Heart right ventricle (tissue), 16 donors: ENCODE measurements at regions of chr12 and their contacts with region 1.

Region 1: DNA sequence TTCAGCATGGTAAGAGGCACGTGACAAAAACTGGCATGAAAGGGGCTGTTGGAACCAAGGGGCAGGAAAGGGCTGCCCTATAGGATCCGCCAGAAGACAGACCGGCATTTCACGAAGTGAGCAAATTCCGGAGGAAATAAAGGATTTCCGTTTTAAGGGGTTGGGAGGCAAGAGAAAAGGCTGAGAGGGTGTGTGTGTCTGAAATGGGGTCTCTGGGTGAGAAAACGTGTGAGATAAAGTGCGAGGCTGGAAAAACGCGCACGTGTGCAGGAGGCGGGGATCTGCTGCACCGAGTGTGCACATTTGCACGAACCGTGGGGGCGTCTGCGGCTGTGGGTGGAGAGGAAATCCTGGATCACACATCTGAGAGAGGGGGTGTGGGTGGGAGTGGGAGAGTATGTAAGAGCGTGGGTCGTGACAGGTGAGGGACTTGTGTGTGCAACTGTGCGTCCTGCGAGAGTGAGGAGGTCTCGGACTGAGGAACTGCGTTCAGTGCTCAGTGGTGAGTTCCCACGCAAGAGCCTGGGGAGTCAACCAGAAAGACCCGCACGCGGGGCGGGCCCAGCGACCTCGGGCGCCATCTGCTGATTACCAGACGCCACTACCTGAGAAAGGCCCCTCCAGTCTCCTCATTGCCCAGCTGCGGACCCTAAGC is 37.0 kb upstream of the P2RX7 start:
- DNase-seq: peak; percentile 58 to 75
- ATAC-seq: peak; percentile 85 to 96 (median 92)
- H3K4me3 ChIP-seq: peak overlapping the region in 8 of 10 donors; percentile 21 to 54 (median 42)
- H3K27ac ChIP-seq: peak overlapping the region in 3 of 10 donors; percentile 27 to 44 (median 33)
- H3K4me1 ChIP-seq: peaks cover 0 to 20% (median 10%) of the 10 kb centered on the region in 9 donors
- H3K27me3 ChIP-seq: no peaks in the 10 kb centered on the region
- CTCF ChIP-seq: peak; percentile 69 to 93 (median 88)

Region 2: DNA sequence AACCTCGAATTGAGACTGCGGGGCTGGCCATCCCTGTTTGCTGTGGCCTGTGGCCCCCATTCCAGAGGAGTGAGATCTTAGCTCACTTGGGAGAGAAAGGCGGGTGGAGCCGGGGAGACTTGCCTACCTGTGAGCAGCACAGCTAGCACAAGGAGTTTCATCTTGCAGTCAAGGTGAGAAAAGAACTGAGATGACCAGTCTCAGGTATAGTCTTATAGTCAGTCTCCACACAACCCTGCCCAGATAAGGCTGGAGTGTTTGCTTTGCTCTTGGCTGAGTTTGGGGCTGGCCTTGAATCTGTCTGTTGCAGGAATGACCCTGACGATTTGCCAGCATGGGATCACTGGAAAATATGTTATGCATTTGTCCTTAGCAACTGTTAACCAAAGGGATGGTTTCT is 768.1 kb before region 1 on chr12 and contains the start of gene PLA2G1B:
- intact Hi-C with region 1: loop called in 1 of 10 experiments (anchors 5 kb)
- DNase-seq: no peak
- ATAC-seq: no peak
- H3K4me3 ChIP-seq: no peak within 1 kb of the TSS
- H3K27ac ChIP-seq: no peak within 1 kb of the TSS
- H3K4me1 ChIP-seq: peaks cover 0 to 8% (median 0%) of the 10 kb centered on the region in 9 donors
- H3K27me3 ChIP-seq: peaks cover 0 to 5% (median 0%) of the 10 kb centered on the region in 7 donors
- CTCF ChIP-seq: no peak
- total RNA-seq, gene PLA2G1B: 0.65 to 1.8 (median 0.89) TPM in 7 of 10 donors, not detected in the others

Region 3: GRCh38 chr12:120598674-120599463 is 496.8 kb before region 1 on chr12:
- intact Hi-C with region 1: loop called in 2 of 10 experiments (anchors 10 kb)
- DNase-seq: no peak
- ATAC-seq: peak in 7 of 8 donors; percentile 56 to 92 (median 72)
- H3K4me3 ChIP-seq: no peak overlapping the region
- H3K27ac ChIP-seq: no peak overlapping the region
- H3K4me1 ChIP-seq: peaks cover 0 to 18% (median 5%) of the 10 kb centered on the region in 9 donors
- H3K27me3 ChIP-seq: peaks cover 0 to 3% (median 0%) of the 10 kb centered on the region in 7 donors
- CTCF ChIP-seq: no peak

Region 4: GRCh38 chr12:121060149-121061001 is 35.3 kb before region 1 on chr12:
- intact Hi-C with region 1: loop called in 7 of 10 experiments (anchors 1 to 5 kb)
- DNase-seq: peak; percentile 20 to 59
- ATAC-seq: peak; percentile 59 to 97 (median 92)
- H3K4me3 ChIP-seq: peak overlapping the region in 9 of 10 donors; percentile 10 to 55 (median 41)
- H3K27ac ChIP-seq: peak overlapping the region; percentile 25 to 93 (median 74)
- H3K4me1 ChIP-seq: peaks cover 0 to 19% (median 9%) of the 10 kb centered on the region in 9 donors
- H3K27me3 ChIP-seq: no peaks in the 10 kb centered on the region
- CTCF ChIP-seq: peak; percentile 18 to 57 (median 49)

Region 5: GRCh38 chr12:121128970-121129810 is 33.5 kb after region 1 on chr12:
- intact Hi-C with region 1: no loop called
- DNase-seq: peak; percentile 77 to 88
- ATAC-seq: peak; percentile 74 to 85 (median 81)
- H3K4me3 ChIP-seq: peak overlapping the region in 6 of 10 donors; percentile 11 to 29 (median 22)
- H3K27ac ChIP-seq: peak overlapping the region in 9 of 10 donors; percentile 50 to 85 (median 61)
- H3K4me1 ChIP-seq: peaks cover 2 to 52% (median 40%) of the 10 kb centered on the region in 9 donors
- H3K27me3 ChIP-seq: no peaks in the 10 kb centered on the region
- CTCF ChIP-seq: no peak

Region 6: DNA sequence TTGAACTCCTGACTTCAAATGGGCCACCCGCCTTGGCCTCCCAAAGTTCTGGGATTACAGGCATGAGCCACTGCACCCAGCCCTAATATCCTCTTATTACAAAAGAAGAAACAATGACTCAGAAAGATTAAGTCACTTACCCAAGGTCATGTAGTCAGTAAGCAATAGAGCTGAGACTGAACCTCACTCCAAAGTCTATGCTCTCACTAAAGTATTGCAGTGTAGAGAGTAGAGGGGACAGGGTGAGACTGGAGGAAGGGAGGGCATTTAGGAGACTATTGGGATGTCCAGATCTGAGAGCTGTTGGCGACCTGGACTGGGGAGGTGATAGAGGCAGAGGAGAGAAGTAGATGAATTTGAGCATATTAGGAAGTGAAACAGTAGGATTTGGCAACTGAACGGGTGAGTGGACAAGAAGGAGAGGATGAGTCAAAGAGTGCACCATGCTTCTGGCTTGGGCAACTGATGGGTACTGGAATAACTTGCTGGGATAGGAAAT is 48.8 kb after region 1 on chr12:
- intact Hi-C with region 1: no loop called
- DNase-seq: no peak
- ATAC-seq: peak in 3 of 8 donors; percentile 19 to 58 (median 41)
- H3K4me3 ChIP-seq: no peak overlapping the region
- H3K27ac ChIP-seq: peak overlapping the region in 1 of 10 donors; percentile 78
- H3K4me1 ChIP-seq: peaks cover 0 to 27% (median 0%) of the 10 kb centered on the region in 9 donors
- H3K27me3 ChIP-seq: no peaks in the 10 kb centered on the region
- CTCF ChIP-seq: no peak